Prostate gland (tissue), 2 donors: ENCODE measurements at regions of chr10 and their contacts with region 1.

Region 1: GRCh38 chr10:74081192-74081803 is 69.3 kb downstream of the AP3M1 start:
- DNase-seq: peak; percentile 16
- H3K4me3 ChIP-seq: no peak overlapping the region
- H3K27ac ChIP-seq: no peak overlapping the region
- H3K4me1 ChIP-seq: no peaks in the 10 kb centered on the region
- H3K27me3 ChIP-seq: no peaks in the 10 kb centered on the region
- CTCF ChIP-seq: peak; percentile 18 to 69 (median 48)
- POLR2A ChIP-seq: no peak

Region 2: DNA sequence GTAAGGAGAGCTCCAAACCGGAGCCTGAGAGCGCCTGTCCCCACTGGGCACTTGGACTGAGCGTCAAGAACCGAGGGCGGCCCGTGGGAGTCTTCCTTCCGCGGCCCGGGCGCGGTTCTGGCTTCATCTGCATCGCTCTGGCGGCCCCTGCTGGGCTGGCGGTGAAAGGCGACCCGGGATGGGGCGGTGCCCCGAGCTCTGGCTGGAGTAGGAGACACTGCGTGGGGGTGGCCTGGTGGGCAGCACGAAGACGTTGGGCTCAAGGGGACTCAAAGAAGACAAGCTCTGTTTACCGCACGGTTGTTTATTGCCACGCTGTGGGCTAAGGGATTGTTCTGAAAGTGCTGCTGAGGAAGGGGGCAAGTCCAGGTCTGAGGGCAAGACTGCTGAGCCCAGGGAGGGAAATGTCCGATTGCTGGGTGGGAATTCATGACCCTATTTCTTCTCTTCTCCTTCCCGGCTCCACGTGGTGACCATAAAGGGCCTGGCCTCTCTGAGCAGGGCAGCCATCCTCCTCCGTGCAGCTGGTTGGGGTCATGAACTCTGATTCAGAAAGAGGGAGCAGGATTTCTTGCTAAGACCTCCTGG is 140.6 kb before region 1 on chr10:
- intact Hi-C with region 1: loop called (anchors 5 kb)
- DNase-seq: peak; percentile 76
- H3K4me3 ChIP-seq: no peak overlapping the region
- H3K27ac ChIP-seq: peak overlapping the region in 1 of 2 donors; percentile 1
- H3K4me1 ChIP-seq: peaks cover 6% of the 10 kb centered on the region
- H3K27me3 ChIP-seq: no peaks in the 10 kb centered on the region
- CTCF ChIP-seq: peak; percentile 77 to 96 (median 89)
- POLR2A ChIP-seq: no peak

Region 3: DNA sequence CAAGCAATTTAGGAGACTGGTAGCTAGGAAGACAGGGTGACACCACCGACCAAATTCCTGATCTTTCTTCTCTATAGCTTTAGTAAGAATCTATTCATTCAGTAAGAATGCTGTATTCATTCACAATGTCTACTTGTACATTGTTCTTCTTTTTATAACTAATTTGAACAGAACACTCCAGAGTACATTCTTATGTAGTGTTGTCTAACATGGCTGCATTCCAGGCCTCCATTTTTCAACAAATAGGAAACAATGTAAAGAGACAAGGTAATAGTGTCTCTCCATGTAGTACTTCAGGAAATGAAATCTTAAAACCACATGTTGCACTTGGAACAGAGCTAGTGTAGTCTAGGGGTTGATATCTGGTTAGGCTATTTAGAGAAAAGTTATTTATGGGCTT is 81.6 kb before region 1 on chr10:
- intact Hi-C with region 1: loop called (anchors 5 kb)
- DNase-seq: peak; percentile 53
- H3K4me3 ChIP-seq: peak overlapping the region; percentile 93 to 98
- H3K27ac ChIP-seq: peak overlapping the region; percentile 95 to 98
- H3K4me1 ChIP-seq: no peaks in the 10 kb centered on the region
- H3K27me3 ChIP-seq: no peaks in the 10 kb centered on the region
- CTCF ChIP-seq: no peak
- POLR2A ChIP-seq: no peak